ENCODE measurements at regions of chr17 and their contacts with region 1.

Region 1: GRCh38 chr17:46841561-46842379 is 9.6 kb upstream of the WNT9B start:
- DNase-seq: peak in 1 of 2 experiments; percentile 54
- ATAC-seq: peak; percentile 79 to 87
- H3K4me3 ChIP-seq: peak overlapping the region; percentile 24; the same call in 2 of the 3 replicates
- H3K27ac ChIP-seq: no peak overlapping the region
- H3K4me1 ChIP-seq: 0 out of 3 replicates have a peak, but pooled peaks cover 3% of the 10 kb centered on the region
- CTCF ChIP-seq: peak; percentile 94
- EP300 ChIP-seq: no peak
- POLR2A ChIP-seq: no peak
- RAD21 ChIP-seq: peak; percentile 57 to 78; a peak in 4 of 5 replicates

Region 2: DNA sequence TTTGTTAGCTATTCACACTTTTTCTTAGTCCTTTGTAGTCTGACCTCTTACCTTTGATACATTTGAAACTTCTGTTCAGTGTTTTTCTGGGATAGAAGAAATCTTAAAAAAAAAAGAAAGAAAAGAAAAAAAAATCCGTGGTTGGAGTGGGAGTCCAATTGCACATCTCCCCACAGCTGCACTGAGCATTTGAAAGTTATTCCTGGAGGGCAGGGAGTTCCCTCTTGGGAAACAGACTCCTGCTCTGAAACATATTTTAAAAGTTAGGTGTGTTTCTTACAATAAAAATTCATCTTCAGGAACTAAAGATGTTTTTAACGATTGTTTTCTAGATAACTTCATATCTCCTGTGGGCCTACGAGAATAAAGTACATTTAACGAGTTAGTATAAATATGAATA is 87.5 kb before region 1 on chr17:
- CTCF ChIA-PET with region 1: no interaction called
- POLR2A ChIA-PET with region 1: no interaction called
- DNase-seq: no peak
- ATAC-seq: no peak
- H3K4me3 ChIP-seq: no peak overlapping the region
- H3K27ac ChIP-seq: no peak overlapping the region
- H3K4me1 ChIP-seq: peaks cover 21% of the 10 kb centered on the region
- CTCF ChIP-seq: no peak
- EP300 ChIP-seq: no peak
- POLR2A ChIP-seq: no peak
- RAD21 ChIP-seq: no peak

Region 3: GRCh38 chr17:46764709-46765401 is 76.9 kb before region 1 on chr17:
- CTCF ChIA-PET with region 1: interaction called, 12 read pairs
- POLR2A ChIA-PET with region 1: no interaction called
- DNase-seq: no peak
- ATAC-seq: peak; percentile 44 to 59; a peak in 4 of 6 replicates
- H3K4me3 ChIP-seq: no peak overlapping the region
- H3K27ac ChIP-seq: peak overlapping the region; percentile 17 to 65; a peak in 4 of 6 replicates
- H3K4me1 ChIP-seq: peaks cover 23% of the 10 kb centered on the region
- CTCF ChIP-seq: no peak
- EP300 ChIP-seq: no peak
- POLR2A ChIP-seq: no peak
- RAD21 ChIP-seq: no peak

Region 4: GRCh38 chr17:46822388-46822921 is 19.3 kb before region 1 on chr17:
- CTCF ChIA-PET with region 1: interaction called, 138 read pairs
- POLR2A ChIA-PET with region 1: no interaction called
- DNase-seq: peak in 1 of 2 experiments; percentile 45
- ATAC-seq: peak; percentile 19 to 70; a peak in 4 of 6 replicates
- H3K4me3 ChIP-seq: 0 out of 3 replicates have a peak overlapping the region, but pooled peaks have one; percentile 16
- H3K27ac ChIP-seq: peak overlapping the region in 1 of 2 experiments; percentile 44; a peak in 1 of 6 replicates
- H3K4me1 ChIP-seq: no peaks in the 10 kb centered on the region
- CTCF ChIP-seq: peak; percentile 91
- EP300 ChIP-seq: no peak
- POLR2A ChIP-seq: no peak
- RAD21 ChIP-seq: peak; percentile 71 to 75

Region 5: GRCh38 chr17:46865100-46865499 is 23.3 kb after region 1 on chr17:
- CTCF ChIA-PET with region 1: interaction called, 18 read pairs
- POLR2A ChIA-PET with region 1: no interaction called
- DNase-seq: no peak
- ATAC-seq: peak in 1 of 2 experiments; percentile 11; a peak in 1 of 6 replicates
- H3K4me3 ChIP-seq: no peak overlapping the region
- H3K27ac ChIP-seq: no peak overlapping the region
- H3K4me1 ChIP-seq: peaks cover 23% of the 10 kb centered on the region
- CTCF ChIP-seq: no peak
- EP300 ChIP-seq: no peak
- POLR2A ChIP-seq: no peak
- RAD21 ChIP-seq: no peak

Region 6: GRCh38 chr17:46922804-46923635 is 81.2 kb after region 1 on chr17 and contains the start of gene GOSR2:
- CTCF ChIA-PET with region 1: interaction called, 15 read pairs
- POLR2A ChIA-PET with region 1: no interaction called
- DNase-seq: peak; percentile 94 to 95
- ATAC-seq: peak; percentile 99
- H3K4me3 ChIP-seq: peak within 1 kb of the TSS; percentile 92
- H3K27ac ChIP-seq: peak within 1 kb of the TSS; percentile 91 to 94
- H3K4me1 ChIP-seq: peaks cover 17% of the 10 kb centered on the region
- CTCF ChIP-seq: no peak
- EP300 ChIP-seq: no peak
- POLR2A ChIP-seq: peak; percentile 86
- RAD21 ChIP-seq: no peak
- polyA plus RNA-seq, gene GOSR2: 68.3 and 71.2 TPM in 2 replicates

Region 7: GRCh38 chr17:46995841-46996571 is 154.2 kb after region 1 on chr17:
- CTCF ChIA-PET with region 1: interaction called, 10 read pairs
- POLR2A ChIA-PET with region 1: no interaction called
- DNase-seq: no peak
- ATAC-seq: peak; percentile 40 to 46; a peak in 3 of 6 replicates
- H3K4me3 ChIP-seq: no peak overlapping the region
- H3K27ac ChIP-seq: no peak overlapping the region
- H3K4me1 ChIP-seq: peaks cover 3% of the 10 kb centered on the region; the same call in 1 of the 3 replicates
- CTCF ChIP-seq: no peak
- EP300 ChIP-seq: no peak
- POLR2A ChIP-seq: no peak
- RAD21 ChIP-seq: no peak

Measured in A549 (cell line).